ENCODE measurements at regions of chr9 and their contacts with region 1.

Region 1: GRCh38 chr9:120985810-120986222 is 59.2 kb upstream of the TRAF1 start:
- DNase-seq: peak in 1 of 10 donors; percentile 14

Region 2: DNA sequence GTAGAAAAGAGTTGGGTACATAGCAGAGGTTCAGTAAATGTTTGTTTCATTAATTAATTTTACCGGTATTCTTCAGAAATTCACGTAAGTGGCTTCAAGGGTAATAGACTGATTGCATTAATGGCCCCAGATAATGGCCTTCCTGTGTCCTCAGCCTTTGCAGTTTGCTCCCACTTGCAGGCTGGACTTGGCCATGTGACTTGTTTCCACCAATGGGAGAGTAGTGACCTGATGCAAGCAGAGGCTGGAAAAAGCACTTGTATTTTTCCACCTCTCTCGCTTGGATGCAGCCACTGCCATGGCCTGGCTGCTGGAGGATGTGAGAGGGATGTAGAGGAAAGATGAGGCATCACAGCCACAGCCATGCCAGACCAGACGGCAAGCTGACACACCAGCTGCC is 886.8 kb before region 1 on chr9:
- intact Hi-C with region 1: no loop called
- DNase-seq: peak in 1 of 10 donors; percentile 74

Region 3: DNA sequence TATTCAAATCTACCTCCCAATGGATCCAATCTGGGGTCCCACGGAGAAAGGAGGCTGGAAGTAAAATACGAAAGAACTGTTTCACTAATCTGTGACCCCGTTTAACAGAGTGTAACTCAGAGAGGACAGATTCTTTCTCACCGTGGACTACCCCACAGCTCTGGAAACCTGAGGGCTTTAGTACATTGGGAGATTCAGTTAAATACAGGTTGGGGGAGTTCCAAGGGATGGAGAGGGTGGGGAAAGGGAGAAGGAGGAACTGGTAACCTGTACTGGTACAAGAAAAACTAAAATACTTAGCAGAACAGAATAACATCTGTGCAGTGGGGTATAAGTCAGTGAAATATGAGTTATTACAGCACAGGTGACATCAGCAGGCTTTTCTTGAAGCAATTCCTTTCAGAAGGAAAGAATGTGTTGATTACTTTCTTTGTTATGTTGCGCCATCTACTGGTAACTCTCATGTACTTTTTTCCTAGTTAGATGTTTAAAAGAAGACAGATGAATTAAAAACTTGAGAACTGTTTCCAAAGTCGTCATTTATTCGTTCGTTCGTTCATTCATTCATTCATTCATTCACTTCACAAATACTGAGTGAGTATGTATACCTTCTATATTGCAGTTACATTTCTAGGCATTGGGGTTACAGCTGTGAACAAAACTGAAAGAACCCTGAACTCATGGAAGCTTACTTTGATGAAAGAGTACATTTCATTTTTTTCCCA is 414.2 kb after region 1 on chr9:
- intact Hi-C with region 1: loop called (anchors 10 kb)
- DNase-seq: no peak

Region 4: DNA sequence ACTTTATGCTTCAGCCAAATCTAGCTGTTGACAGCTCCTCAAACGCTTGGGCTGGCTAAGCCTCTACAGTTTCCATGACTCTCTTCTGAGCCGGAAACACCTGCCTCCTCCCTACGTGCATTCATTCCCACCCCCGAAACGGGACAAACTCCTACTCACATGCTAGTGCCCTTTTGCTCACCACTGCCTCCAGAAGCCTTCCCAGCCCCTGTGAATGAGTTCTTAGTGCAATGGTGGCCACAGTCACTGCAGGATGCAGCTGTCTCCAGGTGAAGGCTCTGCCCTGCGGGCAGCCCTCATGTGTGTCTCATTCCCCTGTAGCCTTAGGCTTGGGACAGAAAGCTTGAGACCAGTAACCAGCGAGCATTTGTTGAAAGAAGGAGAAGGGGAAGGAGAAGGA is 596.8 kb after region 1 on chr9:
- intact Hi-C with region 1: no loop called
- DNase-seq: no peak

Measured in posterior cingulate gyrus (tissue), 11 donors.